Lower leg skin (tissue), 4 donors: ENCODE measurements at regions of chr2 and their contacts with region 1.

Region 1: DNA sequence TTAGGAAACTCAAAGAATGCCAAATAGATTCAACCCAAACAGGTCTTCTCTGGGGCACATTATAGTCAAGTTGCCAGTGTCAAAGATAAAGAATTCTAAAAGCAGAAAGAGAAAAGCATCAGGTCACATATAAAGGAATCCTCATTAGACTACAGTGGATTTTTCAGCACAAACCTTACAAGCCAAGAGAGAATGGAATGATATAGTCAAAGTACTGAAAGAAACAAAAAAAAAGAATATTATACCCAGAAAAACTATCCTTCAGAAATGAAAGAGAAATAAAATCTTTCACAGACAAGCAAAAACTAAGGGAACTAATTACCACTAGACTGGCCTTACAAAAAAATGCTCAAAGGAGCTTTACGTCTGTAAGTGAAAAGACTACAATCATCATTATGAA is 65.5 kb downstream of the TBR1 start:
- DNase-seq: no peak
- H3K4me3 ChIP-seq: no peak overlapping the region
- CTCF ChIP-seq: no peak
- POLR2A ChIP-seq: no peak

Region 2: GRCh38 chr2:161352719-161353118 is 128.9 kb before region 1 on chr2:
- intact Hi-C with region 1: loop called (anchors 2 kb)
- DNase-seq: no peak
- H3K4me3 ChIP-seq: no peak overlapping the region
- CTCF ChIP-seq: no peak
- POLR2A ChIP-seq: no peak

Region 3: DNA sequence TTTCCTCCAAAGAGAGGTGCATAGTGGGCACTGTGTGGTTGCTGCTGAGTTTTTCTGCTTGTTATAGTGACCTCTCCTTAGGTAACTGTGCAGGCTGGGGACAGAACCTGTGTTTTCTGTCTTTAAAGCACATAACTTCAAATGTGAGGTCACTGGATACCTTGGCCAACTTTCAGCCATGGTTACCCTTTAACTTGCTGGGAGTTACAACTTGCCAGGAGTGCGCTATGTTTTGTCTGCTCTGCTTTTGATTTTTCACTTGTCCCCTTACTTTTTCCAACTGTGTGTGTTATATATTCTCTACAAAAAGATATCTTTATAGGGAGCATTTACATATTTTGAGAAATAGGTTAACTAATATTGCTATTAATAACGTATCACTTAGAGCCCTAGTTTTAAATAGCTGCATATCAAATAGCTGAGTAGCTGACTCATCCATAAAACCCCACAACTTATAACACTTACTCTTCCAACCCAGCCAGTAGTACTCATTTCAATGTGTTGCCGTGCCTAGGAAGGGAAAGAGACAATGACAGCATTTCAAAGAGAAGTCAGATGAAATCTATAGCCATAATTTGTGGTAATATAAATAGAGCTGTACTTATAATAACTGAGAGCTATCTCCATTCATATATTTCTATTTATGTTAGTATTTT is 540.8 kb after region 1 on chr2:
- intact Hi-C with region 1: no loop called
- DNase-seq: no peak
- H3K4me3 ChIP-seq: no peak overlapping the region
- CTCF ChIP-seq: no peak
- POLR2A ChIP-seq: no peak

Region 4: DNA sequence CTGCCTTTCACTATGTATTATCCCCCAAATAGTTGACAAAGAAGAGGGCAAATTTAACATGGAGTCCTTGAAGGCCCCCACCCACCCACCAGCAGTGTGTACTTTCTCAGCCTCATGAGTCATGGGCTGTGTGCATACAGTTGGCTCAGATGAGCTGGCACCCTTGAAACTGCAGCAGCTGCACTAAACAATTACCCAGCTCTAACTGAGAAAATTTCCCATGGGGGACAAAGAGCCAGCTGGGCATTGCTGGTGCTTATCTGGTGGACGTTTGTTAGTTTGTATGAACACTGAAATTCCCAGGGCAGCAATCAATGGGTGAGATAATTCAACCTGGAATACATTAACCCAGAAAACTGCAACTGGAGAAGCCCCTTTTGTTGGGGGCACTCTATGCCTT is 994.0 kb after region 1 on chr2:
- intact Hi-C with region 1: no loop called
- DNase-seq: no peak
- H3K4me3 ChIP-seq: no peak overlapping the region
- CTCF ChIP-seq: no peak
- POLR2A ChIP-seq: no peak